Activated CD8-positive, alpha-beta memory T cell treated with anti-CD3 and anti-CD28 coated beads, Interleukin-2, amount 10 ng/mL, durations not matched to agents 7 days and 5 days (primary cell): ENCODE measurements at regions of chr4 and their contacts with region 1.

Region 1: GRCh38 chr4:121462660-121463261 is 81.9 kb upstream of the QRFPR start:
- DNase-seq: peak; percentile 72
- ATAC-seq: peak; percentile 92
- H3K4me3 Mint-ChIP-seq: no peak overlapping the region
- H3K27ac Mint-ChIP-seq: no peak overlapping the region
- H3K4me1 Mint-ChIP-seq: peaks cover 14% of the 10 kb centered on the region
- H3K27me3 Mint-ChIP-seq: peaks cover 50% of the 10 kb centered on the region

Region 2: GRCh38 chr4:121472937-121473721 is 10.4 kb after region 1 on chr4:
- CTCF ChIA-PET with region 1: interaction called, 17 read pairs
- DNase-seq: peak; percentile 59
- ATAC-seq: peak; percentile 64
- H3K4me3 Mint-ChIP-seq: no peak overlapping the region
- H3K27ac Mint-ChIP-seq: peak overlapping the region; percentile 77
- H3K4me1 Mint-ChIP-seq: peaks cover 9% of the 10 kb centered on the region
- H3K27me3 Mint-ChIP-seq: peaks cover 9% of the 10 kb centered on the region

Region 3: GRCh38 chr4:121656269-121656641 is 193.5 kb after region 1 on chr4:
- CTCF ChIA-PET with region 1: interaction called, 13 read pairs
- DNase-seq: peak; percentile 53
- ATAC-seq: peak; percentile 39
- H3K4me3 Mint-ChIP-seq: no peak overlapping the region
- H3K27ac Mint-ChIP-seq: no peak overlapping the region
- H3K4me1 Mint-ChIP-seq: peaks cover 4% of the 10 kb centered on the region
- H3K27me3 Mint-ChIP-seq: peaks cover 2% of the 10 kb centered on the region

Region 4: GRCh38 chr4:121736735-121737351 is 274.1 kb after region 1 on chr4:
- CTCF ChIA-PET with region 1: interaction called, 16 read pairs
- DNase-seq: no peak
- ATAC-seq: peak; percentile 39
- H3K4me3 Mint-ChIP-seq: no peak overlapping the region
- H3K27ac Mint-ChIP-seq: no peak overlapping the region
- H3K4me1 Mint-ChIP-seq: no peaks in the 10 kb centered on the region
- H3K27me3 Mint-ChIP-seq: peaks cover 11% of the 10 kb centered on the region